ENCODE measurements at regions of chr19 and their contacts with region 1.

Region 1: GRCh38 chr19:1540365-1540925 is 16.6 kb downstream of the PLK5 start:
- DNase-seq: no peak
- H3K4me3 ChIP-seq: no peak overlapping the region
- H3K27ac ChIP-seq: no peak overlapping the region
- H3K4me1 ChIP-seq: no peaks in the 10 kb centered on the region; a peak in 1 of 7 replicates
- H3K27me3 ChIP-seq: no peaks in the 10 kb centered on the region
- CTCF ChIP-seq: no peak
- EP300 ChIP-seq: no peak
- POLR2A ChIP-seq: no peak
- RAD21 ChIP-seq: no peak

Region 2: DNA sequence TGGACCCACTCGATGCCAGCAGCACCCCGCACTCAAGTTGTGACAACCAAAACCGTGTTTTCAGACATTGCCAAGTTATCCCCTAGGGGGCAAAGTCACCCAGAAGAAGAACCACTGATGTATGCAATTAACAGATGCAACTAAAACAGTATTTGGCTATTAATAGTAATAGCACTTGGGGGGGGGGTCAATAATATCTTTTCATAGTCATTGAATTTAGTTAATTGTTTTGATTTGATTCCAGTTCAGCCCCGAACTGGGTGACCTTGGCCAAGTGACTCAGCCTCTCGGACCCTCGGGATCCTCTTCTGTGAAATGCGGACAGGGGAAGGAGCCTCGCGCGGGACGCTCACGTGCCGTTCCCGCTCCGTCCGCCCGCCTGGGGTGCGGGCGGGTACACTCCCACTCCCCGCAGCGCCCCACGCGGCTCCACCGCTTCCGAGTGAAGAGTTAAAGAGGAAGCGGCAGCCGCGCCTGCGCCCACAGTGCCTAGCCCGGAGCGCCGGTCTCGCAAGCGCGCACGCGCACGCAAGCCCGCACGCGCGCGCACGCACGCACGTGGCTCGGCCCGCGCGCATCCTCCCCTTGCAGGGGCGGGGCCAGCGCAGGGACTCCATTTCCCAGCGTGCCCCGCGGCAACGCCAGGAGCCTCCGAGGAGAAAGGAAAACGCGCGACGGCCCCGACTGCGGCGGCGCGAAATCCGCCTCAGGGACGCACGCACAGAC is 133.5 kb before region 1 on chr19:
- CTCF ChIA-PET with region 1: no interaction called
- POLR2A ChIA-PET with region 1: no interaction called
- DNase-seq: peak; percentile 91 to 99
- H3K4me3 ChIP-seq: peak overlapping the region; percentile 49 to 71 (median 64)
- H3K27ac ChIP-seq: 0 out of 2 replicates have a peak overlapping the region, but pooled peaks have one; percentile 26
- H3K4me1 ChIP-seq: peaks cover 2 to 26% (median 17%) of the 10 kb centered on the region in 4 experiments; a peak in 6 of 7 replicates
- H3K27me3 ChIP-seq: peaks cover 0 to 2% (median 0%) of the 10 kb centered on the region in 4 experiments; a peak in 2 of 7 replicates
- CTCF ChIP-seq: peak; percentile 24 to 57 (median 36); a peak in 3 of 4 replicates
- EP300 ChIP-seq: no peak
- POLR2A ChIP-seq: no peak
- RAD21 ChIP-seq: peak; percentile 23 to 40; a peak in 3 of 4 replicates

Region 3: DNA sequence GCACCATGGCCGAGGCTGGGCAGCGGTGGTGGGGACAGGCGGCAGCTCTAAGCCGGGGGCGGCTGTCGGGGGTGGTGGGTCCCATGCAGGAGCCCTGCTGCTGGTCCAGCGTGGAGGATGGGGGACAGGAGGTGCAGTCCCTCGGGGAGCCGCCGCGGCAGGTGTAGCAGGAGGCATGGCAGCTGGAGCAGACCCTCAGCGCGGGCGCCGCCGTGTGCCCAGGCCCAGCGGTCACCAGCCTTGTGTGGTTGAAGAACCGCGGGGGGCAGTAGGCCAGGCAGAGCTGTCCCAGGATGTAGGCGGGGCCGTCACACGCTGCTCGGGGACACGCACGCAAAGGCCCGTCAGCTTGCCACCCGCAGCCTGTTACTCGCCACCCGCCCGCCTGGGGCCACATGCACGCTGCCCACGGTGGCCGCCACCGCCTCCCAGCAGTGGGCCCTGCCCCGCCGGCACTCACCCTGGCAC is 58.5 kb before region 1 on chr19:
- CTCF ChIA-PET with region 1: no interaction called
- POLR2A ChIA-PET with region 1: no interaction called
- DNase-seq: no peak
- H3K4me3 ChIP-seq: no peak overlapping the region
- H3K27ac ChIP-seq: no peak overlapping the region
- H3K4me1 ChIP-seq: no peaks in the 10 kb centered on the region; a peak in 2 of 7 replicates
- H3K27me3 ChIP-seq: no peaks in the 10 kb centered on the region
- CTCF ChIP-seq: no peak
- EP300 ChIP-seq: no peak
- POLR2A ChIP-seq: no peak
- RAD21 ChIP-seq: no peak

Region 4: GRCh38 chr19:1561236-1561842 is 20.9 kb after region 1 on chr19:
- CTCF ChIA-PET with region 1: interaction called, 10 read pairs
- POLR2A ChIA-PET with region 1: interaction called, 3 read pairs
- DNase-seq: no peak
- H3K4me3 ChIP-seq: no peak overlapping the region
- H3K27ac ChIP-seq: no peak overlapping the region
- H3K4me1 ChIP-seq: peaks cover 0 to 8% (median 6%) of the 10 kb centered on the region in 4 experiments; a peak in 6 of 7 replicates
- H3K27me3 ChIP-seq: no peaks in the 10 kb centered on the region
- CTCF ChIP-seq: no peak
- EP300 ChIP-seq: no peak
- POLR2A ChIP-seq: no peak
- RAD21 ChIP-seq: no peak

Region 5: GRCh38 chr19:1584500-1585242 is 44.2 kb after region 1 on chr19:
- CTCF ChIA-PET with region 1: interaction called, 14 read pairs
- POLR2A ChIA-PET with region 1: interaction called, 5 read pairs
- DNase-seq: peak in 1 of 2 experiments; percentile 90
- H3K4me3 ChIP-seq: peak overlapping the region in 1 of 4 experiments; percentile 68; a peak in 1 of 8 replicates
- H3K27ac ChIP-seq: no peak overlapping the region
- H3K4me1 ChIP-seq: no peaks in the 10 kb centered on the region
- H3K27me3 ChIP-seq: no peaks in the 10 kb centered on the region; a peak in 1 of 7 replicates
- CTCF ChIP-seq: no peak
- EP300 ChIP-seq: no peak
- POLR2A ChIP-seq: no peak
- RAD21 ChIP-seq: no peak

Region 6: DNA sequence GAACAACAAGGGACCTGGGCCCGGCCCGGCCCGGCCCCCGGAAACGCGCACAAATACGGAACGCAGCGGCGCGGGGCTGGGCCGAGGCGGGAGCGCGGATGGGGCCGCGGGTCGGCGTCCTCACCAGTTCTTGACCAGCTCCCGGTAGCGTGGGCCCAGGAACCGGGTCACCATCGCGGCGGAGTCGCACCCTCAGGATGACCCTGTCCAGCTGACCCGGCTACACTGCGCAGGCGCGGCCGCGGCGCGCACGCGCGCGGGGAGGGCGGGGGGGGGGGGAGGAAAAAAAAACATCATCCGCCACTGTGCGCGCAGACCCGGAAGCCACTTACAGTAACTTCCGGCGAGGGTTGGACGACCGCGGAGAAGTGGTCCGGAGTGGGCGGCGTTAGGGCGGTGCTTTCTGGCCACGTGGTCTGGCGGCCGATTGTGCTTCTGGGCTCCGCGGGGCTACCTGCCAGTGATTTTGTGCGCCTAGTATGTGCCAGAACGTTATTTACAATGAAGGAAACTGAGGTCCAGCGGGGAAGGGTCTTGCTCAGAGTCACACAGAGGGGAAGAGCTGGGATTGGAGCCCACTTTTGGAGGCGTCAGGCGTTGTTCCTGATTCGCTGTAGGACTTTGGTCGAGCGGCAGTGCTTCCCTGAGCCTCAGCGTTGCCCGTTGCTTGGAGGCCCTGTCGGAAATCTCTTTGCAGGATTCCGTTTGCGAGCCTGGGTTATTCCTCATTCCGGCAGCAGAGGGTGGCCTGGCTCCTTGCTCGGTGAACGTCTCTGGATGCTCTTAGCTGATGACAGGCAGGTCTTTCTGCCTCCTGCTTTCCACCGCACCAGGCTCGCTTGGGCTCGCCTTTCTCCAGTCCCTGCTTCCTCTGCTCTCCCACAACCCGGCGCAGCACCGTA is 65.0 kb after region 1 on chr19 and contains the start of gene UQCR11:
- CTCF ChIA-PET with region 1: interaction called, 36 read pairs
- POLR2A ChIA-PET with region 1: no interaction called
- DNase-seq: peak; percentile 79 to 90
- H3K4me3 ChIP-seq: peak within 1 kb of the TSS; percentile 64 to 86 (median 72)
- H3K27ac ChIP-seq: peak within 1 kb of the TSS; percentile 82
- H3K4me1 ChIP-seq: peaks cover 0 to 7% (median 3%) of the 10 kb centered on the region in 4 experiments; a peak in 6 of 7 replicates
- H3K27me3 ChIP-seq: no peaks in the 10 kb centered on the region
- CTCF ChIP-seq: peak; percentile 45 to 72 (median 50); a peak in 3 of 4 replicates
- EP300 ChIP-seq: no peak
- POLR2A ChIP-seq: peak in 1 of 2 experiments; percentile 49; a peak in 2 of 3 replicates
- RAD21 ChIP-seq: peak; percentile 66 to 73
- total RNA-seq, gene UQCR11: 162 and 179 TPM in 2 replicates